IMR-90 (cell line): ENCODE measurements at regions of chr1 and their contacts with region 1.

Region 1: GRCh38 chr1:114716304-114717170 is at the start of gene NRAS:
- DNase-seq: peak; percentile 91
- ATAC-seq: peak; percentile 91
- H3K4me3 ChIP-seq: peak within 1 kb of the TSS; percentile 86
- H3K27ac ChIP-seq: peak within 1 kb of the TSS; percentile 96
- H3K4me1 ChIP-seq: no peaks in the 10 kb centered on the region
- H3K27me3 ChIP-seq: no peaks in the 10 kb centered on the region
- CTCF ChIP-seq: no peak
- POLR2A ChIP-seq: peak; percentile 74
- RAD21 ChIP-seq: no peak
- total RNA-seq, gene NRAS: 85.9 and 110 TPM in 2 replicates

Region 2: GRCh38 chr1:114745291-114745690 is 28.8 kb after region 1 on chr1:
- CTCF ChIA-PET with region 1: no interaction called
- POLR2A ChIA-PET with region 1: no interaction called
- dilution Hi-C with region 1: no loop called
- in situ Hi-C with region 1: no loop called
- intact Hi-C with region 1: no loop called
- DNase-seq: peak; percentile 66
- ATAC-seq: no peak
- H3K4me3 ChIP-seq: no peak overlapping the region
- H3K27ac ChIP-seq: no peak overlapping the region
- H3K4me1 ChIP-seq: no peaks in the 10 kb centered on the region
- H3K27me3 ChIP-seq: no peaks in the 10 kb centered on the region
- CTCF ChIP-seq: no peak
- POLR2A ChIP-seq: no peak
- RAD21 ChIP-seq: no peak

Region 3: GRCh38 chr1:114757455-114758250 is 41.1 kb after region 1 on chr1 and contains the start of gene CSDE1:
- CTCF ChIA-PET with region 1: no interaction called
- POLR2A ChIA-PET with region 1: interaction called, 3 read pairs
- dilution Hi-C with region 1: no loop called
- in situ Hi-C with region 1: no loop called
- intact Hi-C with region 1: loop called (anchors 1 kb)
- DNase-seq: peak; percentile 99
- ATAC-seq: peak; percentile 93
- H3K4me3 ChIP-seq: peak within 1 kb of the TSS; percentile 67
- H3K27ac ChIP-seq: peak within 1 kb of the TSS; percentile 89
- H3K4me1 ChIP-seq: peaks cover 2% of the 10 kb centered on the region; the same call in 1 of the 2 replicates
- H3K27me3 ChIP-seq: no peaks in the 10 kb centered on the region
- CTCF ChIP-seq: peak; percentile 49
- POLR2A ChIP-seq: peak; percentile 98
- RAD21 ChIP-seq: peak; percentile 49
- total RNA-seq, gene CSDE1: 879 and 2,287 TPM in 2 replicates

Region 4: GRCh38 chr1:114901814-114902213 is 185.3 kb after region 1 on chr1:
- CTCF ChIA-PET with region 1: no interaction called
- POLR2A ChIA-PET with region 1: no interaction called
- dilution Hi-C with region 1: no loop called
- in situ Hi-C with region 1: no loop called
- intact Hi-C with region 1: no loop called
- DNase-seq: no peak
- ATAC-seq: no peak
- H3K4me3 ChIP-seq: no peak overlapping the region
- H3K27ac ChIP-seq: no peak overlapping the region
- H3K4me1 ChIP-seq: no peaks in the 10 kb centered on the region
- H3K27me3 ChIP-seq: no peaks in the 10 kb centered on the region
- CTCF ChIP-seq: no peak
- POLR2A ChIP-seq: no peak
- RAD21 ChIP-seq: no peak

Region 5: DNA sequence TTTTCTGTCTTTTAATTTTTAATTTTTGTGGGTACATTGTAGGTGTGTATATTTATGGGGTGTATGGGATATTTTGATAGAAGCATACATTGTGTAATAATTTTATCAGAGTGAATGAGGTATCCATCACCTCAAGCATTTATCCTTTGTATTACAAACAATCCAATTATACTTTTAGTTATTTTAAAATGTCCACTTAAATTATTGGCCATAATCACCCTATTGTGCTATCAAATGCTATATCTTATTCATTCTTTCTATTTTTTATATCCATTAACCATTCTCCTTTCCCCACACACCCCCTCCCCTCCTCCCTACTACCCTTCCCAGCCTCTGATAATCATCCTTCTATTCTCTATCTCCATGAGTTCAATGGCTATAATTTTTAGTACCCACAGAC is 242.9 kb after region 1 on chr1:
- CTCF ChIA-PET with region 1: no interaction called
- POLR2A ChIA-PET with region 1: no interaction called
- dilution Hi-C with region 1: no loop called
- in situ Hi-C with region 1: no loop called
- intact Hi-C with region 1: no loop called
- DNase-seq: no peak
- ATAC-seq: no peak
- H3K4me3 ChIP-seq: no peak overlapping the region
- H3K27ac ChIP-seq: no peak overlapping the region
- H3K4me1 ChIP-seq: no peaks in the 10 kb centered on the region
- H3K27me3 ChIP-seq: no peaks in the 10 kb centered on the region
- CTCF ChIP-seq: no peak
- POLR2A ChIP-seq: no peak
- RAD21 ChIP-seq: no peak